Activated naive CD4-positive, alpha-beta T cell treated with anti-CD3 and anti-CD28 coated beads, Interleukin-2, amount 10 ng/mL, durations not matched to agents 7 days and 5 days (primary cell): ENCODE measurements at regions of chr12 and their contacts with region 1.

Region 1: DNA sequence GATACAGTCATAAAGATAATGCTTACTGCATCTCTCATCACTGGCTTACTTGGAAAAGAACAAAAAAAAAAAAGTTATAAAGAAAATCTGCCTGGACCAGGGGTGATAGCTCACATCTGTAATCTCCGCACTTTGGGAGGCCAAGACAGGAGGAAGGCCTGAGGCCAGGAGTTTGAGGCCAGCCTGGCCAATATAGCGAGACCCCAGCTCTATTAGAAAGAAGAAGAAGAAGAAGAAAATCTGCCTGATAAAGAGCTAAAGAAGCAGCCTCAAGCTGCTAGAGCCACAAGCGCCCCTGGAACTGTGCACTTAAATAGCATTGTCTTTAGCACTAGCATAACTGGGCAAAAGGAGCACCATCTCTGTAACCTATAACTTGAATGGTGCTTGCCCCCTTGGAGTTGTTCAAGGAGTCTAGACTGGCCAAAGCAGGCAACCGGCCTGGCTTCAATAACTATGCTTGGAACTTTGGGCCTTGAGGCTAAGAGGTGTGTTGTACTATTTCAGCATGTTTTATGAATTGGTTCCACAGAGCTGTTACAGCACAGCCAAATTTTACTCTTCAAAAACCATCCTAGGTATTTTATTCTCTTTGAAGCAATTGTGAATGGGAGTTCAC is 53.2 kb downstream of the SINHCAF start:
- DNase-seq: no peak
- H3K4me3 Mint-ChIP-seq: no peak overlapping the region
- H3K27ac Mint-ChIP-seq: peak overlapping the region; percentile 60
- H3K4me1 Mint-ChIP-seq: no peaks in the 10 kb centered on the region
- H3K27me3 Mint-ChIP-seq: no peaks in the 10 kb centered on the region

Region 2: DNA sequence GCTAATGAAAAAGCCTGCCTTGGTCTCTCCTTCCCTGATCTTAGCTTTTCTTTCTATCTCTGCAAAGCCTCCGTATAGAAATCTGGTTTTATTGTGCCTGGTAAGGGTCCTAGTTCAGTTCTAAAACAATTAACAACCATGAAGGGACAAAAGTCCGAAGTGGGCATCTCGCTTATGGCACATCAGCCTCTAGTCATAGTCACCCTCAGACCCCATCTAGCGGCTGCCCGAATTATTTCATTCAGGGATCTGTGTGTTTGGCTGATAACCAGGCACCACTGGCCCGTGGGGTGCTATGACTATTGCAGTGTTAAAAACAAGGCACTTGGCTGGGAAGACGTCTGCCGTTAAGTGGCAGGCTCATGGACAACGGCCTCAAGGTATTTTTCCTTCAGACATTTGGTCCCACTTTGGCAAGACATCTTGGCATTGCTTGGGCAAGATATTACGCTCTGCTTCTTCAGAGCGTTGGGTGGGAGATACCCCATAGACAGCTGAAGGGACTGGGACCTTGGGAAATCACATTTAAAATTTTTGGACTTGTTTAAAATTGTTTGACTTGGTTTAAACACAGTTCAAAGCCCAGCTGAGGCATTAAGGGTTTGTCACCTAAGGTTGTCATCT is 33.8 kb before region 1 on chr12:
- CTCF ChIA-PET with region 1: interaction called, 14 read pairs
- DNase-seq: peak; percentile 83
- H3K4me3 Mint-ChIP-seq: no peak overlapping the region
- H3K27ac Mint-ChIP-seq: no peak overlapping the region
- H3K4me1 Mint-ChIP-seq: peaks cover 3% of the 10 kb centered on the region
- H3K27me3 Mint-ChIP-seq: peaks cover 44% of the 10 kb centered on the region

Region 3: DNA sequence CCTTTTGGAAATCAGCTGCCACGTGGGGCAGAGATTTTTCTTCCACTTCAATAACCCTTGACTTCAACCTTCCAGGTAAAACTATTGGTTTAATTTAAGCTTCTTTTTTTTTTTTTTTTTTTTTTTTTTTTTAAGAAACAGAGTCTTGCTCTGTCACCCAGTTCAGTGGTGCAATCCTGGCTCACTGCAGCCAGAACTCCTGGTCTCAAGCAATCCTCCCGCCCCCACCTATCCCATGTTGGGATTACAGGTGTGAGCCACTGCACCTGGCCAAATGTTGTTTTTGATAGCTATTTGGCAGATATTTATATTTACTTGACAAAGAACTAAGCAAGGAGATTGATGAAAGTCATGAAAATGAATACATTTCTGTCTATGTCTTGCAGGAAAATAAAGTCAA is 11.9 kb before region 1 on chr12:
- CTCF ChIA-PET with region 1: interaction called, 20 read pairs
- DNase-seq: no peak
- H3K4me3 Mint-ChIP-seq: no peak overlapping the region
- H3K27ac Mint-ChIP-seq: no peak overlapping the region
- H3K4me1 Mint-ChIP-seq: no peaks in the 10 kb centered on the region
- H3K27me3 Mint-ChIP-seq: peaks cover 8% of the 10 kb centered on the region

Region 4: DNA sequence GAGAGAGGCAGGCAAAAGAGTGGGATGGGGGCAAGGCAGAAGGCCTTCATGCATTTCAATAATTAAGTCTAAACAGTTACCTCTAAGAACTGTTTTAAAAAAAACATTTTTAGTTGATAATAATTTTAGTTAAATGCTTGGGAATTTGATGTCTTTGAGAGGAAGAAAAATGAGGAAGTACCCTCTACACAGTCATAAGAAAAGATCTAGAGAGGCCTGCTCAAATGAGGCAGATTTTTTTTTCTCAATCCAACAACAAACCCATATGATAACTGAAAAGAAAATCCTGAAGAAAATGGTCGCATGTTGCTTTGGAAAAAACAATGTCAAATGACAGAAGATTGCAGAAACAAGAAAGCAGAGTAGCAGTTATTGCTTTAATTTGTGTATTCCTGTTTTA is 27.6 kb after region 1 on chr12:
- CTCF ChIA-PET with region 1: interaction called, 12 read pairs
- DNase-seq: no peak
- H3K4me3 Mint-ChIP-seq: no peak overlapping the region
- H3K27ac Mint-ChIP-seq: no peak overlapping the region
- H3K4me1 Mint-ChIP-seq: peaks cover 16% of the 10 kb centered on the region
- H3K27me3 Mint-ChIP-seq: no peaks in the 10 kb centered on the region